B cell (primary cell): ENCODE measurements at regions of chr15 and their contacts with region 1.

Region 1: GRCh38 chr15:38440353-38441129 is 13.4 kb upstream of the FAM98B start:
- DNase-seq: peak; percentile 76
- ATAC-seq: peak; percentile 95
- H3K4me3 ChIP-seq: no peak overlapping the region
- H3K4me3 Mint-ChIP-seq: no peak overlapping the region
- H3K27ac ChIP-seq: no peak overlapping the region
- H3K27ac Mint-ChIP-seq: no peak overlapping the region
- H3K4me1 ChIP-seq: peaks cover 0 to 5% of the 10 kb centered on the region in 2 donors
- H3K4me1 Mint-ChIP-seq: peaks cover 2% of the 10 kb centered on the region
- H3K27me3 ChIP-seq: peaks cover 0 to 2% (median 0%) of the 10 kb centered on the region in 4 experiments
- H3K27me3 Mint-ChIP-seq: peaks cover 39% of the 10 kb centered on the region
- CTCF ChIP-seq: peak; percentile 97

Region 2: GRCh38 chr15:38427380-38427779 is 13.2 kb before region 1 on chr15:
- CTCF ChIA-PET with region 1: interaction called, 16 read pairs
- POLR2A ChIA-PET with region 1: no interaction called
- intact Hi-C with region 1: no loop called
- DNase-seq: no peak
- ATAC-seq: no peak
- H3K4me3 ChIP-seq: no peak overlapping the region
- H3K4me3 Mint-ChIP-seq: no peak overlapping the region
- H3K27ac ChIP-seq: no peak overlapping the region
- H3K27ac Mint-ChIP-seq: no peak overlapping the region
- H3K4me1 ChIP-seq: no peaks in the 10 kb centered on the region
- H3K4me1 Mint-ChIP-seq: no peaks in the 10 kb centered on the region
- H3K27me3 ChIP-seq: no peaks in the 10 kb centered on the region
- H3K27me3 Mint-ChIP-seq: peaks cover 37% of the 10 kb centered on the region
- CTCF ChIP-seq: no peak

Region 3: DNA sequence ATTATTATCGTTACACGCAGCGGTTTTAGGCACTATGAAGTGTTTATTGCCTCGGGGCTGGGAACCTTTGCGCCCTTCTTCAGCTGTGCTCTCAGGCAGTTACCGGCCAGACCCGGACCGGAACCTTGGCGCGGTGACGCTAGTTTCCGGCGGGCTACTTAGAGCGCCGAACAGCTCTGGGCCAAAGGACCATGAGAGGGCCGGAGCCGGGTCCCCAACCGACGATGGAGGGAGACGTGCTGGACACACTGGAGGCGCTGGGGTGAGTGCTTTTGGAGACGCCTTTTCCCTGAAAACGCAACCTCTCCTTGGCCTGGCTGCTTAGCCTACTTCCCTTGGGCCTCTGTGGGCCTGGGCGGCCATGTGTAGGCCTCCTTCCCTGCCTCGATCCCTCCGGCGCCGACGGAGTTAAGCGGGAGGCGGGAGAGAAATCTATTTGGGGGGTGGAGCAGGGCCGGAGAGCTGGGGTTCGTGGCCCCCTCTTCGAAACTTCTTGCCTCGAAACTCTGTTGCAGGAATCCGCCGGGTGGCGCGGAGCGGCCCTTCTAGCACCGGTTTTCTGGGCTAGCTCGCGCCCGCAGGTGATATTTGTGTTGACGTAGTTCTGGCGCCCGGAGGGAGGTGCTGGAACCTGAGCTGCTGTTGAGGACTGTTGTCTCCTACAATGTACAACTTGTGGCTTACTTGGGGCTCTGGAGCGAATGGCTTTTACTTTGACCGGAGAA is 13.6 kb after region 1 on chr15 and contains the start of gene FAM98B:
- CTCF ChIA-PET with region 1: interaction called, 31 read pairs
- POLR2A ChIA-PET with region 1: no interaction called
- intact Hi-C with region 1: no loop called
- DNase-seq: peak; percentile 91
- ATAC-seq: peak; percentile 86
- H3K4me3 ChIP-seq: peak within 1 kb of the TSS; percentile 69 to 94 (median 86)
- H3K4me3 Mint-ChIP-seq: peak within 1 kb of the TSS; percentile 99
- H3K27ac ChIP-seq: peak within 1 kb of the TSS; percentile 87 to 89
- H3K27ac Mint-ChIP-seq: peak within 1 kb of the TSS; percentile 97
- H3K4me1 ChIP-seq: peaks cover 9% of the 10 kb centered on the region in 2 donors
- H3K4me1 Mint-ChIP-seq: peaks cover 27% of the 10 kb centered on the region
- H3K27me3 ChIP-seq: no peaks in the 10 kb centered on the region
- H3K27me3 Mint-ChIP-seq: peaks cover 10% of the 10 kb centered on the region
- CTCF ChIP-seq: peak; percentile 12
- total RNA-seq, gene FAM98B: 16.6 and 21.5 TPM in 2 replicates

Region 4: DNA sequence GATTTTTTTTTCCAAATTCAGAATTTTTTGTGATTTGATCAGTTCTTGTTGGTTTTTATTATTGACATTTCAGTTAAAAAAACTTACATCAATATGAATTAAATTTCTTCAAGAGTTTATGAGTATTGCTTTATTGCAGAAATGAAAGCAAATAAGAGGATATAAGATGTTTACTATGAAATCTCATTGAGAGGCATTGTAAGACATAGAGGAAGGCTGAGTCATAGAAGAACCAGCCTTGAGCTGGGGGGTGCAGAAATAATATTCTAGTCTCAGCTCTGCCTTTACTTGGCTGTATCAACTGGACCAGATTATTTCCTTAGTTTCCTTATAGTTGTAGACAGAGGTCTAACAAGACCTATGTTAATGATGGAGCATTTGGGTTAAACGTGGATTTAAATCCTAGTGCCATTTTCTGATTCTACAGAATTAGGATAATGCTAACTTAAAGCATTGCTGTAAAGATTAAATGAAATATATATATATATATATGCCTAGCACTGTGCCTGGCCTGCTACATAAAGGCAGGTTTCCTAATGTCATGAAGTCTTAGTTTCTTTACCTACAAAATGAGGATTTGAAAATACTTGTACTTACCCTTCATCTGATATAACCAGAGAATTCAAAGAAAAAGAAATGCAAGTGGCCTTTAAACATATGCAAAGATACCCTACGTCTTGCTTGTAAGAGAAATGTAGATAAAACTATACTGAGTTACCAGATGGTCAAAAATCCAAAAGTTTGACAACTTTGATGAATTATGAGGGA is 20.7 kb after region 1 on chr15:
- CTCF ChIA-PET with region 1: interaction called, 12 read pairs
- POLR2A ChIA-PET with region 1: no interaction called
- intact Hi-C with region 1: no loop called
- DNase-seq: no peak
- ATAC-seq: peak; percentile 41
- H3K4me3 ChIP-seq: no peak overlapping the region
- H3K4me3 Mint-ChIP-seq: no peak overlapping the region
- H3K27ac ChIP-seq: no peak overlapping the region
- H3K27ac Mint-ChIP-seq: no peak overlapping the region
- H3K4me1 ChIP-seq: peaks cover 0 to 7% of the 10 kb centered on the region in 2 donors
- H3K4me1 Mint-ChIP-seq: peaks cover 30% of the 10 kb centered on the region
- H3K27me3 ChIP-seq: no peaks in the 10 kb centered on the region
- H3K27me3 Mint-ChIP-seq: no peaks in the 10 kb centered on the region
- CTCF ChIP-seq: no peak

Region 5: DNA sequence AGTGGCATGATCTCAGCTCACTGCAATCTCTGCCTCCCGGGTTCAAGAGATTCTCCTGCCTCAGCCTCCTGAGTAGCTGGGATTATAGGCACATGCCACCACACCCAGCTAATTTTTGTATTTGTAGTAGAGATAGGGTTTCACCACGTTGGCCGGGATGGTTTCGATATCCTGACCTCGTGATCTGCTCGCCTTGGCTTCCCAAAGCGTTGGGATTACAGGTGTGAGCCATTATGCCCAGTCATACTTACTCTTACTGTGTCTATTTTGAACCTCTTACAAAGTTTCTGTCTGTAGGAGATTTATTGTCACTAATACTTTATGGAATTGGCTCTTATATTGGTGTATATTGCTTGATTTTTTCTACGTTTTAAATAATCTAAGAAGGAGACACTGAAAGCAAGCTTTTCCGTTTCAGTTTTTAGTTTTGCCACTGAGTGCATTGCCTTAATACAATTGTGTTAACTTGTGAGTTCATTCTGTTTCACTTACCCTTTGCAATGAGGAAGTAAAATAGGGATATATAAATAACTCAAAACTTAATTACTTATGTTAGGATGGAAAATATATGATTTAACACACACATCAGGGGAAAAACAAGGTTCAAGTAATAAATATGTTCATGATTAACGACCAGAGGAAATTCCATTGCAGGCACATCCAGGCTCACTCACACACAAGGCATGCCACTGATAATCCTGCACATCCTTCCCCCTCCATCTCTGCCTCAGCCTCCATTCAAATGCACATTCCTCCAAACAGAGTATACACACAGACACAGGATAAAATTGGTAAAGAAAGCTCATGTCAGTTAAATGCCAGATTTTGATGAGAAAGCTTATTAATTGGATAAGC is 403.4 kb after region 1 on chr15:
- CTCF ChIA-PET with region 1: no interaction called
- POLR2A ChIA-PET with region 1: no interaction called
- intact Hi-C with region 1: no loop called
- DNase-seq: no peak
- ATAC-seq: no peak
- H3K4me3 ChIP-seq: no peak overlapping the region
- H3K4me3 Mint-ChIP-seq: no peak overlapping the region
- H3K27ac ChIP-seq: no peak overlapping the region
- H3K27ac Mint-ChIP-seq: no peak overlapping the region
- H3K4me1 ChIP-seq: no peaks in the 10 kb centered on the region
- H3K4me1 Mint-ChIP-seq: no peaks in the 10 kb centered on the region
- H3K27me3 ChIP-seq: no peaks in the 10 kb centered on the region
- H3K27me3 Mint-ChIP-seq: peaks cover 17% of the 10 kb centered on the region
- CTCF ChIP-seq: no peak